Activated CD4-positive, alpha-beta T cell treated with anti-CD3 and anti-CD28 coated beads for 36 hours (primary cell): ENCODE measurements at regions of chr4 and their contacts with region 1.

Region 1: DNA sequence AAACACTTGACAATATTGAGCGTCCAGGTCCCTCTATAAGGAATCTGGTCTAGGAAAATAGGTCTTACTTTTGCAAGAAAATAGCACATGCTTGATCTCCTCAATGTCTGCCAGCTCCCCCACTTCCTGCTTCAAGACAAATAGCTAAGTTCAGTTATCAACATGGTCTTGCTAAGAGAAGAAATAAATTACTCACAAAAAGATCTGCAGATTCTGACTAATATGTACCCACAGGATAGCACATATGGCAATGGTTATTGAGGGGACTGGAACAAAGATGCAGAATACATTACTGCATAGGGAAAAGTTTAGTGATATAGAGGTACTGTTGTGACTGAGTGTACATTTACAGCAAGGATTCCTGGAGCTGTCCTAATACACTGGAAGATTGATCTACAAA is 457.5 kb upstream of the GRID2 start:
- DNase-seq: no peak
- ATAC-seq: no peak
- H3K4me3 Mint-ChIP-seq: no peak overlapping the region
- H3K27ac Mint-ChIP-seq: no peak overlapping the region
- H3K4me1 Mint-ChIP-seq: no peaks in the 10 kb centered on the region
- H3K27me3 Mint-ChIP-seq: no peaks in the 10 kb centered on the region

Region 2: DNA sequence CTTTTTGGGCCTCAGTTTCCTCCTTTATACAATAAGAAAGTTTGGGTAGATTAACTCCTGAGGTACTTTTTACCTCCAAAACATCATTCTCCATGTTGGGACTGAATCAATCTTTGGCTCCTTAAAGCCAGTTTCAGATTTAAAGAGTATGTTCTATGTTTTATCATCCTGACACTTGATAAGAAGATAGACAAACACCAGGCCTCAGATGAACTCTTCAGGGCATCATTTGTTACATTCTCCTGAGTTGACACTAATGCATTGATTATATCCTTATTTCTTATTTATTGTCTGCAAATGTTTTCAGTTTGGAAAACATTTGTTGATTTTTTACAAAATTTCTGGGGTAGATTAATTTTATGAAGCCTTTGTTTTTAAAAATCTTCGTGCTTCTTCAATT is 1821.7 kb before region 1 on chr4:
- CTCF ChIA-PET with region 1: no interaction called
- POLR2A ChIA-PET with region 1: no interaction called
- intact Hi-C with region 1: loop called in 1 of 2 experiments (anchors 5 kb)
- DNase-seq: no peak
- ATAC-seq: no peak
- H3K4me3 Mint-ChIP-seq: no peak overlapping the region
- H3K27ac Mint-ChIP-seq: no peak overlapping the region
- H3K4me1 Mint-ChIP-seq: no peaks in the 10 kb centered on the region
- H3K27me3 Mint-ChIP-seq: peaks cover 3% of the 10 kb centered on the region

Region 3: DNA sequence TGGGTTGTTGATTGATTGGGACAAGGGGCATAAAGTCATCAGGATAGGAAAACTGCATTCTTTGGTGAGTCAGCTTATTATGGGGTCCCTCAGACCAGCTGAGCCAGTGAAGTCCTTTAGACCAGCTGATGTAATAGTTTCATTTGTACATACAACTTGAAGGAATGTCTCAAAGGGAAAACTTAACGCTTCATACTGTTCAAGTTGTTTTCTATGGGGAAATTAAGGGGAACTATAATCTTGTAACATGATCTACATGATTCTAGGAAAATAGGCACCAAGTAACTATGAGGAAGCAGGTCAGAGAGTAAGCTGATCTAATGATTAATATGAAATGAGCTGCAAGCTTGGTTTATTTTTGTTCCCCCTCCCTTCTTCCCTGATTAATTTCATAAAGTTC is 282.4 kb after region 1 on chr4:
- CTCF ChIA-PET with region 1: no interaction called
- POLR2A ChIA-PET with region 1: no interaction called
- intact Hi-C with region 1: no loop called
- DNase-seq: no peak
- ATAC-seq: no peak
- H3K4me3 Mint-ChIP-seq: no peak overlapping the region
- H3K27ac Mint-ChIP-seq: no peak overlapping the region
- H3K4me1 Mint-ChIP-seq: no peaks in the 10 kb centered on the region
- H3K27me3 Mint-ChIP-seq: no peaks in the 10 kb centered on the region

Region 4: GRCh38 chr4:92172203-92172602 is 326.0 kb after region 1 on chr4:
- CTCF ChIA-PET with region 1: no interaction called
- POLR2A ChIA-PET with region 1: no interaction called
- intact Hi-C with region 1: no loop called
- DNase-seq: no peak
- ATAC-seq: no peak
- H3K4me3 Mint-ChIP-seq: no peak overlapping the region
- H3K27ac Mint-ChIP-seq: no peak overlapping the region
- H3K4me1 Mint-ChIP-seq: no peaks in the 10 kb centered on the region
- H3K27me3 Mint-ChIP-seq: no peaks in the 10 kb centered on the region

Region 5: DNA sequence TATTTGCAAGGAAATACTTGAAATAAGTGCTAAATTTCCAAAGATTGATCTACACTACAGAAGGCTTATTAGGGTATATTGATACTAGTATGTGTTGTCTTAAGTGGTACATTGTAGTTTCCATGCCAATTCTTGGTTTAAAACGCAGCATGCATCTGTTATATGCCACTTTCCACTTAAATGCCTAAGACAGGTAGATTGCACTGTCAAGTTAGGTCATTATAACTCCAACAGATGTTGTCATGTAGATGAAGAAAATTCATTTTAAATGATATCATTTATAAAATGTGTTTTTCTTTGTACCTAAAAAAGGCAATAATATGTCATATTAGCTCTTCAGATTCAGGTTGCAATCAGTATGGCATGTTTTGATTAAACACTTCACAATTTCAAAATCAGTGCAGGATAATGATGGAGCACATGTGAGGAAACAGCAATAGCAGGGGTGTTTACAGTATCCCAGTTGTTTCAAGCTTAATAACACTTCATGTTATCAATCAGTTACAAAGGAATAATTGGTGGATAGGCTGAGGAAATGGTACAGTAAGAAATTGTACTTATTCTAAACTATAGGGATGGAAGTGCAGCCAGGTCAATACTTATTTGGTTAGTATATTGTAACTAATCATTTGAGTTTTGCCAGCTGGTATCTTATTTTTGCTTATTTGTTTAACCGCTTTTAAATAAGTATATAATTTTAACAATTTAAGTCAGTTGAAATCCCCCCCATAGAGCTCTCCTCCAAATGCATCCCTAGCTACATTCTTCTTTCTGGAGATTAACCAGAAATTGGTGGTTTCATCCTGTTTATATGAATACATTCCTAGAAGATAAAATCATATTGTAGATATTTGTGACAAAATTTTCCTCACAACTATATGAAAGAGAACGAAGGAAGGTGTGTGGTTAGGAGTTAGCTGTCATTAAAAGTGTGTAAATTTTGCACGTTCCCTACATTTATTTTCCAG is 1527.9 kb after region 1 on chr4:
- CTCF ChIA-PET with region 1: no interaction called
- POLR2A ChIA-PET with region 1: no interaction called
- intact Hi-C with region 1: loop called in 1 of 2 experiments (anchors 5 kb)
- DNase-seq: no peak
- ATAC-seq: no peak
- H3K4me3 Mint-ChIP-seq: no peak overlapping the region
- H3K27ac Mint-ChIP-seq: no peak overlapping the region
- H3K4me1 Mint-ChIP-seq: no peaks in the 10 kb centered on the region
- H3K27me3 Mint-ChIP-seq: no peaks in the 10 kb centered on the region